ENCODE measurements at regions of chr20 and their contacts with region 1.

Region 1: GRCh38 chr20:47411161-47411560 is 54.7 kb upstream of the ZMYND8 start:
- DNase-seq: no peak
- ATAC-seq: no peak
- H3K4me3 ChIP-seq: peak overlapping the region; percentile 64
- H3K27ac ChIP-seq: peak overlapping the region; percentile 91
- H3K4me1 ChIP-seq: peaks cover 55% of the 10 kb centered on the region
- H3K27me3 ChIP-seq: no peaks in the 10 kb centered on the region
- CTCF ChIP-seq: no peak
- EP300 ChIP-seq: no peak
- POLR2A ChIP-seq: no peak
- RAD21 ChIP-seq: no peak

Region 2: DNA sequence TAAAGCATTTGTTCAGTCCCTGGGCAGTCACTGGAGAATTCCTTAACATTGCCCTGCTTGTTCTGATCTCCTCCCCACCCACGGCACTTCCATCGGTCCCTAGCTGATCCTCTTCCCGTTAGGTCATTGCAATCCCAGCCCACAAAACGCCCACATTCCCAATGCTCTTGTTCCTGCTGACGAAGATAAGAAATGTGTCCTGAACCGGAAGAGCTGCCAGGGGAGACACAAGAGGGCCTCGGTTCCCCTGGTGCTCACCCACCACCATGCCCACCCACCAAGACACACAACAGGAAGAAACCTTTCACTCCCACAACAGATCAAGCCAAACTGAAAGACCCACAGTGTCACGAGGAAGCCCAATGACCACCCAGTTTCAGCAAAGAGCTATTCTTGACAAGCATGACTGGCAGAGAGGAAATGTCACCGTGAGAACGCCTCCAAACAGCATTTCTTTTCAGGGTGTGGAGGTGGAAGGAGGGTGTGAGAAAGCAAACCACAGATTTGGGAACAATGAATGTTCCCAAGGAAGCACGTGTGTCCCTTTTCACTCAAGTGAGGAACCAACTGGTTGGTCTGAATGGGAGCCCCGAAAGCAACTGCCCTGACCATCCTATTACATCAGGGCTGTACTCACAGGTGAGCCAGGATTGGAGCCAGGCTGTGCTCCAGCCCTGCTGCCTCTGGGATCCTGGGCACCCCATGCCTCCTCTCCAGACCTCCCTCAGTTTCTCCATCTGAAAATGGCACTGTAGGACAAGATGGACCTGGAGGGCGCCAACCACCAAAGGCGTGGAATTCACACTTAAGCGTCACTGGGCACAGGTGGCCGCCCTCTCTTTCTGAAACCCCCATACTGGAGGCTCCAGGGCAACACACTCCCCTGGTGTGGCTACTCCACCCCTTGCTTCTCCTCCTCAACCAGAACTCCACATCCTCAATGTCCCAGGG is 152.1 kb before region 1 on chr20:
- CTCF ChIA-PET with region 1: interaction called, 4 read pairs
- POLR2A ChIA-PET with region 1: interaction called, 7 read pairs
- RAD21 ChIA-PET with region 1: interaction called, 7 read pairs
- SMC1A ChIA-PET with region 1: interaction called, 10 read pairs
- in situ Hi-C with region 1: no loop called
- intact Hi-C with region 1: no loop called
- DNase-seq: peak; percentile 98
- ATAC-seq: peak; percentile 62
- H3K4me3 ChIP-seq: peak overlapping the region; percentile 3; the same call in 1 of the 2 replicates
- H3K27ac ChIP-seq: peak overlapping the region; percentile 86
- H3K4me1 ChIP-seq: peaks cover 58% of the 10 kb centered on the region
- H3K27me3 ChIP-seq: no peaks in the 10 kb centered on the region
- CTCF ChIP-seq: no peak
- EP300 ChIP-seq: peak in 1 of 2 experiments; percentile 90; a peak in 2 of 4 replicates
- POLR2A ChIP-seq: no peak; the same call in 1 of the 2 replicates
- RAD21 ChIP-seq: no peak

Region 3: GRCh38 chr20:47432211-47433210 is 21.4 kb after region 1 on chr20:
- CTCF ChIA-PET with region 1: interaction called, 3 read pairs
- POLR2A ChIA-PET with region 1: interaction called, 5 read pairs
- RAD21 ChIA-PET with region 1: interaction called, 10 read pairs
- SMC1A ChIA-PET with region 1: interaction called, 17 read pairs
- in situ Hi-C with region 1: no loop called
- intact Hi-C with region 1: loop called (anchors 1 kb)
- DNase-seq: no peak
- ATAC-seq: no peak
- H3K4me3 ChIP-seq: no peak overlapping the region
- H3K27ac ChIP-seq: no peak overlapping the region
- H3K4me1 ChIP-seq: peaks cover 27% of the 10 kb centered on the region
- H3K27me3 ChIP-seq: no peaks in the 10 kb centered on the region
- CTCF ChIP-seq: no peak
- EP300 ChIP-seq: no peak
- POLR2A ChIP-seq: no peak
- RAD21 ChIP-seq: no peak

Region 4: GRCh38 chr20:47464380-47465101 is 53.4 kb after region 1 on chr20:
- CTCF ChIA-PET with region 1: no interaction called
- POLR2A ChIA-PET with region 1: interaction called, 27 read pairs
- RAD21 ChIA-PET with region 1: interaction called, 17 read pairs
- SMC1A ChIA-PET with region 1: interaction called, 142 read pairs
- in situ Hi-C with region 1: no loop called
- intact Hi-C with region 1: loop called (anchors 1 kb)
- DNase-seq: no peak
- ATAC-seq: no peak
- H3K4me3 ChIP-seq: no peak overlapping the region
- H3K27ac ChIP-seq: no peak overlapping the region
- H3K4me1 ChIP-seq: peaks cover 27% of the 10 kb centered on the region
- H3K27me3 ChIP-seq: no peaks in the 10 kb centered on the region
- CTCF ChIP-seq: no peak
- EP300 ChIP-seq: no peak
- POLR2A ChIP-seq: no peak
- RAD21 ChIP-seq: no peak

Region 5: GRCh38 chr20:47493175-47493962 is 82.2 kb after region 1 on chr20:
- CTCF ChIA-PET with region 1: interaction called, 21 read pairs
- POLR2A ChIA-PET with region 1: interaction called, 55 read pairs
- RAD21 ChIA-PET with region 1: interaction called, 143 read pairs
- SMC1A ChIA-PET with region 1: interaction called, 122 read pairs
- in situ Hi-C with region 1: no loop called
- intact Hi-C with region 1: no loop called
- DNase-seq: no peak
- ATAC-seq: peak; percentile 48
- H3K4me3 ChIP-seq: peak overlapping the region; percentile 19
- H3K27ac ChIP-seq: peak overlapping the region; percentile 82
- H3K4me1 ChIP-seq: peaks cover 81% of the 10 kb centered on the region
- H3K27me3 ChIP-seq: no peaks in the 10 kb centered on the region
- CTCF ChIP-seq: no peak
- EP300 ChIP-seq: no peak
- POLR2A ChIP-seq: no peak
- RAD21 ChIP-seq: no peak

Region 6: GRCh38 chr20:47576516-47577033 is 165.4 kb after region 1 on chr20:
- CTCF ChIA-PET with region 1: no interaction called
- POLR2A ChIA-PET with region 1: no interaction called
- RAD21 ChIA-PET with region 1: interaction called, 12 read pairs
- SMC1A ChIA-PET with region 1: interaction called, 8 read pairs
- in situ Hi-C with region 1: no loop called
- intact Hi-C with region 1: no loop called
- DNase-seq: peak; percentile 46
- ATAC-seq: peak; percentile 85
- H3K4me3 ChIP-seq: peak overlapping the region; percentile 45
- H3K27ac ChIP-seq: peak overlapping the region; percentile 74
- H3K4me1 ChIP-seq: peaks cover 52% of the 10 kb centered on the region
- H3K27me3 ChIP-seq: no peaks in the 10 kb centered on the region
- CTCF ChIP-seq: no peak
- EP300 ChIP-seq: no peak
- POLR2A ChIP-seq: no peak
- RAD21 ChIP-seq: no peak